Transverse colon (tissue), 4 donors: ENCODE measurements at regions of chr3 and their contacts with region 1.

Region 1: GRCh38 chr3:185498503-185499396 is at the start of gene TMEM41A:
- DNase-seq: peak; percentile 96
- H3K4me3 ChIP-seq: peak within 1 kb of the TSS; percentile 55 to 100 (median 78)
- H3K27ac ChIP-seq: peak within 1 kb of the TSS; percentile 90 to 96 (median 92)
- H3K4me1 ChIP-seq: peaks cover 10 to 28% (median 11%) of the 10 kb centered on the region in 4 donors
- H3K27me3 ChIP-seq: no peaks in the 10 kb centered on the region
- CTCF ChIP-seq: peak in 1 of 5 experiments; percentile 3
- EP300 ChIP-seq: no peak
- POLR2A ChIP-seq: peak; percentile 95
- total RNA-seq, gene TMEM41A: 13.5 to 20.6 (median 15.5) TPM

Region 2: GRCh38 chr3:185585859-185586685 is 87.3 kb after region 1 on chr3 and contains the start of gene SENP2:
- in situ Hi-C with region 1: loop called in 1 of 4 experiments (anchors 5 kb)
- intact Hi-C with region 1: no loop called
- DNase-seq: peak; percentile 100
- H3K4me3 ChIP-seq: peak within 1 kb of the TSS; percentile 71 to 93 (median 80)
- H3K27ac ChIP-seq: peak within 1 kb of the TSS; percentile 94 to 97 (median 96)
- H3K4me1 ChIP-seq: peaks cover 17 to 41% (median 21%) of the 10 kb centered on the region in 4 donors
- H3K27me3 ChIP-seq: no peaks in the 10 kb centered on the region
- CTCF ChIP-seq: peak in 1 of 5 experiments; percentile 18
- EP300 ChIP-seq: no peak
- POLR2A ChIP-seq: peak; percentile 94
- total RNA-seq, gene SENP2: 4.0 to 28.4 (median 18.4) TPM